HEK293 (cell line): ENCODE measurements at regions of chr18 and their contacts with region 1.

Region 1: GRCh38 chr18:37341473-37342086 is 224.0 kb downstream of the CELF4 start:
- H3K4me3 ChIP-seq: no peak overlapping the region
- H3K27ac ChIP-seq: no peak overlapping the region
- H3K4me1 ChIP-seq: no peaks in the 10 kb centered on the region
- CTCF ChIP-seq: no peak

Region 2: DNA sequence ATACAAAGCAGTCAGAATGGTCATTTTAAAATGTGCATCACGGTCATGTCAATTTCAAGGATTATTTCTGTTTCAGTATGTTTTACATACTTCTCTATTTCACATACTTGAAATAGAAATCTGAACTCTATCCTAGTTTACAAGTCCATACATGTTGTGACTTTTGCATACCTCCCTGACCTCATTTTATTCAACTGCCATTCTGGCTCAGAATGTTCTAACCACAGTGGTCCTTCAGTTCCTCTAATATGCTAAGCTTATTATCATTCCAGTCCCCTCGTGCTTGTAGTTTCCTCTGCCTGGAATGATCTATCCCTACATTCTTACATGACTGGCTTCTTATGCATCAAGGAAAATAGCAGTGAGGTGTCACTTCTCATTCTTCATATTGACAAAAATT is 217.1 kb before region 1 on chr18:
- CTCF ChIA-PET with region 1: no interaction called
- POLR2A ChIA-PET with region 1: no interaction called
- H3K4me3 ChIP-seq: no peak overlapping the region
- H3K27ac ChIP-seq: no peak overlapping the region
- H3K4me1 ChIP-seq: no peaks in the 10 kb centered on the region
- CTCF ChIP-seq: no peak

Region 3: DNA sequence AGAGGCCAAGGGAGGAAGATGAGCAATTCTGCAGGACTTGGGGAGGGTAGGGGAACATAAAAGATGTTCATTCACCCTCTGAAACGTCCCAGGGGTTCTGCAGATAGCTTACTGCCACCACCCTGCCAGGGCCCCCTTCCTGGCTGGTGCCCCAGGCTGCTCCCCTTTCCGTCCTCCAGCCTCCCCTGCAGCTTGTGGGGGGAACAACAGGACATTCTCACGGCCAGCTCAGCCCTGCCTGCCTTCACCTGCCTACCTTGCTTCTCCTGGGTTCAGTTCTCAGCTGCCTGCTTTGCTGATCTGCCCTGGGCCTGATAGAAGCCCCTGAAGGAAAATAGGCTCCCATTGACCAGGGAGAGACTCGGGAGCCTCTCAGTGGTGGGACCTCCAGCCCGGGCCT is 27.0 kb before region 1 on chr18:
- CTCF ChIA-PET with region 1: no interaction called
- POLR2A ChIA-PET with region 1: no interaction called
- H3K4me3 ChIP-seq: no peak overlapping the region
- H3K27ac ChIP-seq: no peak overlapping the region
- H3K4me1 ChIP-seq: no peaks in the 10 kb centered on the region
- CTCF ChIP-seq: no peak

Region 4: GRCh38 chr18:37355772-37356171 is 14.2 kb after region 1 on chr18:
- CTCF ChIA-PET with region 1: interaction called, 15 read pairs
- POLR2A ChIA-PET with region 1: no interaction called
- H3K4me3 ChIP-seq: no peak overlapping the region
- H3K27ac ChIP-seq: no peak overlapping the region
- H3K4me1 ChIP-seq: no peaks in the 10 kb centered on the region
- CTCF ChIP-seq: no peak